Activated CD4-positive, alpha-beta T cell treated with anti-CD3 and anti-CD28 coated beads, Interleukin-2, amount 10 ng/mL, durations not matched to agents 24 days and 14 days (primary cell): ENCODE measurements at regions of chr18 and their contacts with region 1.

Region 1: DNA sequence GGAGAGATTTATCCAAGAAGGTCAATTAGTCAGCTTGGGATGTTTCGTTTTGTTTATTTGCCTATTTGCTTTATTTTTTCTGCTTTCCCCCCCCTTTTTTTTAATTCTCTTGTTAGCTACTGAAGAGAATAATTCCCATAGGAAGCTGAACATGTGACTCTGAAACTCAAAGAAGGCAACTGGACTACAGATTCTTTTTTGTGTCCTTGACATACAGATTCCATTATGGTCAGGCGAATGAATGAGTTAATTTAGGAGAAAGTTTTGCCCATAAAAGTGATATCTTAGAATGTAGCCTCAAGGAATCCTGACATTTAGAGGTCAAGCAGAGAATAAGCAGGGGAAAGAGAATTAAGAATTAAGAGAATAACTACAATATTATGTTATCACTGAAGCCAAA is 514.2 kb upstream of the LINC00305 start:
- DNase-seq: no peak
- H3K4me3 Mint-ChIP-seq: no peak overlapping the region
- H3K27ac Mint-ChIP-seq: no peak overlapping the region
- H3K4me1 Mint-ChIP-seq: no peaks in the 10 kb centered on the region
- H3K27me3 Mint-ChIP-seq: no peaks in the 10 kb centered on the region

Region 2: DNA sequence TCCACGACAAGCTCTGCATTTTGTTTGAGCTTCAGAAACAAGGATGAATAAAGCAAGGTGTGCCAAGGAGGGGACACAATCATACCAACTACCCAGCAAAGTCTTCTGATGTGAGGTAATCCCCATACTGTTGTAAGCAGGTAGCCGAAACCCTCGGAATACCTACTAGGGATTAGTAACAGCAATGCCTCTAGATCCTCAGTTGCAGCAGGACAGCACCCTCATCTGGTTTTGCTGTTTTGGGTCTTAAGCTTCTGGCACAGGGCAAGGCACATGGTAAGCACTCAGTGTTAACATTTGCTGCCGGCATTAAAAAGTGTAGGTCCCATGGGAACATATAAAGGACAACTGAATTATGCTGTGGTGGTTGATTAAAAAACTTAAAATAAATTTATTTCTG is 498.2 kb before region 1 on chr18:
- intact Hi-C with region 1: loop called (anchors 5 kb)
- DNase-seq: no peak
- H3K4me3 Mint-ChIP-seq: no peak overlapping the region
- H3K27ac Mint-ChIP-seq: no peak overlapping the region
- H3K4me1 Mint-ChIP-seq: no peaks in the 10 kb centered on the region
- H3K27me3 Mint-ChIP-seq: no peaks in the 10 kb centered on the region